ENCODE measurements at regions of chr3 and their contacts with region 1.

Region 1: GRCh38 chr3:80688814-80689213 is 921.0 kb upstream of the ROBO1 start:
- DNase-seq: no peak
- H3K4me3 ChIP-seq: no peak overlapping the region
- H3K27ac ChIP-seq: no peak overlapping the region
- H3K4me1 ChIP-seq: no peaks in the 10 kb centered on the region
- H3K27me3 ChIP-seq: no peaks in the 10 kb centered on the region
- CTCF ChIP-seq: peak in 2 of 4 experiments; percentile 38 to 50
- POLR2A ChIP-seq: no peak

Region 2: DNA sequence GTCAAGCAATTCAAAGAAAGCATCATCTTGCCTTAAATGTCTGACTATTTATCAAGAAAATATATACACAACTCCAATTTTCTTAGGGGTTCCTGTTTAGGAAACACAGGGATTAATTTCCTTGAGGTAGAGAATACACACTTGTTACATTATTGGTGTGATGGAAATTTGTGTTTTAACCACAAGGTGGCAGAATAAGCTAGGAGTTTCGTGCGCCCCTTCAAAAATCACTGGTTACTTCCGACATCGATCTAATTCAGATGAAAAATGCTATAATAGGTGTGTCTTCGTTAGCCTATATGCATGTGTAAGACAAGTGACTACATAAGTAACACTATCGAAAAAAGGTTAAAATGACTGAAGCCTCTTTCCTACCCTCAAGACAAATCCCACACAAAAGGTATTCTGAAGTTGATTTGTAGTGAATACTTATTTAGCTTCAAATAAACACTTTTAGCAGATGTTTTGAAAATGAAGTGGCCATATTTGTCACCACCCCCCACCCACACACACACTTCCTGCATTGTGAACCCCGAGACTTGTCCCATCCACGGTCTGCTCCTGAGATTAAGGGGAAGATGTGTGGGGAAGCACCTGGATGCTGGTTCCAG is 1167.5 kb before region 1 on chr3:
- intact Hi-C with region 1: loop called (anchors 5 kb)
- DNase-seq: no peak
- H3K4me3 ChIP-seq: no peak overlapping the region
- H3K27ac ChIP-seq: no peak overlapping the region
- H3K4me1 ChIP-seq: no peaks in the 10 kb centered on the region
- H3K27me3 ChIP-seq: no peaks in the 10 kb centered on the region
- CTCF ChIP-seq: peak in 3 of 4 experiments; percentile 54 to 74 (median 69)
- POLR2A ChIP-seq: no peak

Region 3: DNA sequence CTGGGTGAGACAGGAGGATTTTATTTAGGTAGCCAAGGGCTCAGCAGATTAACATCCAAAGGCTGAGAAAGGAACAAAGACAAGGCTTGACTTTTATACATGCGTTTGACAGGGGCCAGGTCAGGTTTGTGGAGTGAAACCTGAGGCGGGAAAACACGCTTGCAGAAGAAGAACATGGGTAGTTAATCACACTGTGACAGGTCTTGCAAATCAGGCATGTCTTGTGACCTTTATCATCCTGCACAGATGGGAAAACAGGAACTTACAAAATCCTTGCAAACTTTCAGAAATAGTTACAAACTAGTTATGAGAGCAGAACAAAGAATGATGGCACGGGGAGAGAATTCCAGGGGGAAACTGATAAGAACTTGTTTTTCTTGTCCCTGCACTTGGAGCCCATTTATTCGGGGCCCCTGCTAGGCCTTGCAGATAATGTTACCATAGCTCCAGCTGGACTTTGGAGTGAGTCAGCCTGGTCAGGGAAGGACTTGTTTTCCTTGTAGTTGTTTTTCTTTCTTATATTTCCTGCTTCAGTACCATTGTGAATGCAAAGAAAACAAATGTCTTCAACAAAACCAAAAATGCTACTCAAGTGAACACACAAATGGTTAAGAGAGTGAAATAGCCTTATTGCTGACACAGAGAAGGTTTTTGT is 44.8 kb after region 1 on chr3:
- intact Hi-C with region 1: no loop called
- DNase-seq: no peak
- H3K4me3 ChIP-seq: no peak overlapping the region
- H3K27ac ChIP-seq: no peak overlapping the region
- H3K4me1 ChIP-seq: no peaks in the 10 kb centered on the region
- H3K27me3 ChIP-seq: no peaks in the 10 kb centered on the region
- CTCF ChIP-seq: no peak
- POLR2A ChIP-seq: no peak

Measured in prostate gland (tissue), 2 donors.